PC-9 (cell line): ENCODE measurements at regions of chr11 and their contacts with region 1.

Region 1: GRCh38 chr11:130213143-130213978 is 53.8 kb downstream of the ST14 start:
- DNase-seq: peak in 1 of 2 experiments; percentile 56
- H3K4me3 ChIP-seq: no peak overlapping the region
- H3K27ac ChIP-seq: no peak overlapping the region
- H3K4me1 ChIP-seq: no peaks in the 10 kb centered on the region
- H3K27me3 ChIP-seq: no peaks in the 10 kb centered on the region
- CTCF ChIP-seq: peak; percentile 98

Region 2: GRCh38 chr11:130050257-130050656 is 163.1 kb before region 1 on chr11:
- CTCF ChIA-PET with region 1: no interaction called
- POLR2A ChIA-PET with region 1: no interaction called
- intact Hi-C with region 1: no loop called
- DNase-seq: no peak
- H3K4me3 ChIP-seq: no peak overlapping the region
- H3K27ac ChIP-seq: no peak overlapping the region
- H3K4me1 ChIP-seq: no peaks in the 10 kb centered on the region
- H3K27me3 ChIP-seq: no peaks in the 10 kb centered on the region
- CTCF ChIP-seq: no peak

Region 3: GRCh38 chr11:130156108-130157022 is 57.0 kb before region 1 on chr11:
- CTCF ChIA-PET with region 1: no interaction called
- POLR2A ChIA-PET with region 1: no interaction called
- intact Hi-C with region 1: no loop called
- DNase-seq: peak; percentile 53 to 75
- H3K4me3 ChIP-seq: no peak overlapping the region
- H3K27ac ChIP-seq: peak overlapping the region; percentile 63
- H3K4me1 ChIP-seq: peaks cover 28% of the 10 kb centered on the region
- H3K27me3 ChIP-seq: no peaks in the 10 kb centered on the region
- CTCF ChIP-seq: no peak

Region 4: GRCh38 chr11:130278151-130278550 is 64.8 kb after region 1 on chr11:
- CTCF ChIA-PET with region 1: no interaction called
- POLR2A ChIA-PET with region 1: no interaction called
- intact Hi-C with region 1: no loop called
- DNase-seq: peak in 1 of 2 experiments; percentile 19
- H3K4me3 ChIP-seq: no peak overlapping the region
- H3K27ac ChIP-seq: no peak overlapping the region
- H3K4me1 ChIP-seq: no peaks in the 10 kb centered on the region
- H3K27me3 ChIP-seq: no peaks in the 10 kb centered on the region
- CTCF ChIP-seq: no peak

Region 5: DNA sequence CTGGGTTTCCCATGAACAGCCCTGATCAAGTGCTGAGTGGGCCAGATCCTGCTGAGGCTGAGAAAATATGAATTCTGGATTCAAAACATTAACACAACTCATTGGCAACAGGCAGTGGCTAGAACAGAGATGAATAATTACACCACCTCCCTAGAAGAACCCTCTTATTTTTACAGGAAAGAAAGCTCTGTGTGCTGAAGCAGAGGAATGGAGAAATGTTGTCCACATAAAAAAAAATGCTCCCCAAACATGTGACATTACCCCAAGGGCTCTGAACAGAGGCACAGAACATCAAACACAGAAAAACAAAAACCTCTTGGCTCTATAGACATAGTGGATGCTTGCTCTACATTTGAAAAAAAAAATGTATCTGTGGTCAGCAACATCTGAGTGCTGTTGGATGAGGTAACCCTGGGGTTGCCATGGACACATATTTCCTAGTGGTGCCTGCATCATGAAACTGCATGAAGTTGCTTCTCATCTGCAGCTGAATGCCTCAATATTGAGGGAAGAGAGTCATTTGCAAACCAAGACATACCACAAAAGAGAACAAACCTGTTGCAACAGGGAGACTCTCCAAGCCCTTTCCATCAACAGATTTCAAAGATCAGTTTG is 604.1 kb after region 1 on chr11:
- CTCF ChIA-PET with region 1: no interaction called
- POLR2A ChIA-PET with region 1: interaction called, 10 read pairs
- intact Hi-C with region 1: no loop called
- DNase-seq: no peak
- H3K4me3 ChIP-seq: no peak overlapping the region
- H3K27ac ChIP-seq: no peak overlapping the region
- H3K4me1 ChIP-seq: no peaks in the 10 kb centered on the region
- H3K27me3 ChIP-seq: no peaks in the 10 kb centered on the region
- CTCF ChIP-seq: no peak

Region 6: GRCh38 chr11:130861902-130862860 is 648.8 kb after region 1 on chr11:
- CTCF ChIA-PET with region 1: no interaction called
- POLR2A ChIA-PET with region 1: no interaction called
- intact Hi-C with region 1: loop called (anchors 1 kb)
- DNase-seq: peak; percentile 74 to 79
- H3K4me3 ChIP-seq: no peak overlapping the region
- H3K27ac ChIP-seq: no peak overlapping the region
- H3K4me1 ChIP-seq: no peaks in the 10 kb centered on the region
- H3K27me3 ChIP-seq: no peaks in the 10 kb centered on the region
- CTCF ChIP-seq: peak; percentile 100

Region 7: DNA sequence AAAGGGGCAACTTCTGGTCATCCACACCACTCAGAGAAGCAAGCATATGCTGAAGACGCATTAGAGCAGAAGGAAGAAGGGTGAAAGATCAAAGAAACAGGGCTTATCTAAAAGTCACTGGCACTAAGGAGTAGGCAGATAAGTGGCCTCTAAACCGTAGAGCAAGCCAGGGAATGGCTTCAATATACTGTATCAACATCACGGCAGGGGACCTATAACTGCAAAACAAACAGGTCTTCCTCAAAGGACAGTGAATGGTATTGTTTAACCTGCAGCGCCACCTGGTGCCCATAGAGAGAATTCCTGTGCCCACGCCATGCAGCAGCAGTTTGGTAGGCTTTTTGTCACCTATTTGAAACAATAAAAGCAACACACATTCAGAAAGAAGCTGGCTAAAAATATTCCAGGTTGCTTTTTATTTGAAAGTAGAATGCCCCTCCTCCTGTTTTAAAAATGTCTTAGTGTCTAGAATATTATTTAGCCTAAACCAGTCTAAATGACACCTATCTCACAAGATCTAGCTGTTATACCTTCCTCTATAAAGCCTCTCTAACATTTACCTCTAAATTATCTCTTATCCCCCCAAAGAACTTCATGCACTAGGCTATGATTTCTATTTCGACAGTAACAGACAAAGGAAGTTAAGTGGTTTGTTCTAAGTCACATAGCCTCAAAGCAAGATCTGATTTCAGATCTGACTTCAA is 681.1 kb after region 1 on chr11:
- CTCF ChIA-PET with region 1: no interaction called
- POLR2A ChIA-PET with region 1: no interaction called
- intact Hi-C with region 1: loop called (anchors 10 kb)
- DNase-seq: peak; percentile 58 to 59
- H3K4me3 ChIP-seq: no peak overlapping the region
- H3K27ac ChIP-seq: no peak overlapping the region
- H3K4me1 ChIP-seq: no peaks in the 10 kb centered on the region
- H3K27me3 ChIP-seq: no peaks in the 10 kb centered on the region
- CTCF ChIP-seq: peak; percentile 92